HepG2 (cell line): ENCODE measurements at regions of chr1 and their contacts with region 1.

Region 1: DNA sequence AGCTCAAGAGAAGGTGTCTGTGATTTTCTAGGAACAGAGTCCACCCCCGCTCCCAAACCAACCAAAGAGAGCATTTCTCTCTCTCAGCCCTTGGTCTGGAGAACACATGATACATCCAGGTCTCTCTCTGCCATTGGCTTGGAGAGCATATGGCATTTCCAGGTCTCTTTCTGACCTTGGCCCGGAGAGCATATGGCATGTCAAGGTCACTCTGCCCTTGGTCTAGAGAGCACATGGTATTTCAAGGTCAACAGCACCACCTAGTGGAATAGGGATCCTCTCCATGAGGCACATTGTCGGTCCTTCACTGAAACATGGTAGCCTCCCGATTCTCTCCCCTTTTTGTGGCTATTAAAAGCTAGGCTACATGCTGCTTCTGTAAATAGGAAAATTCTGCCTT is 437.7 kb upstream of the OLFM3 start:
- DNase-seq: peak; percentile 52
- ATAC-seq: peak; percentile 88
- H3K4me3 ChIP-seq: no peak overlapping the region
- H3K27ac ChIP-seq: no peak overlapping the region
- H3K4me1 ChIP-seq: no peaks in the 10 kb centered on the region
- H3K27me3 ChIP-seq: no peaks in the 10 kb centered on the region
- CTCF ChIP-seq: peak; percentile 82
- EP300 ChIP-seq: no peak
- POLR2A ChIP-seq: no peak
- RAD21 ChIP-seq: 0 out of 2 replicates have a peak, but pooled peaks have one; percentile 20

Region 2: GRCh38 chr1:101506541-101507164 is 927.8 kb before region 1 on chr1:
- CTCF ChIA-PET with region 1: no interaction called
- POLR2A ChIA-PET with region 1: no interaction called
- in situ Hi-C with region 1: loop called (anchors 25 kb)
- intact Hi-C with region 1: loop called (anchors 5 kb)
- DNase-seq: peak; percentile 44
- ATAC-seq: peak; percentile 75
- H3K4me3 ChIP-seq: no peak overlapping the region
- H3K27ac ChIP-seq: no peak overlapping the region
- H3K4me1 ChIP-seq: no peaks in the 10 kb centered on the region
- H3K27me3 ChIP-seq: no peaks in the 10 kb centered on the region
- CTCF ChIP-seq: peak; percentile 59
- EP300 ChIP-seq: no peak
- POLR2A ChIP-seq: no peak
- RAD21 ChIP-seq: no peak

Region 3: DNA sequence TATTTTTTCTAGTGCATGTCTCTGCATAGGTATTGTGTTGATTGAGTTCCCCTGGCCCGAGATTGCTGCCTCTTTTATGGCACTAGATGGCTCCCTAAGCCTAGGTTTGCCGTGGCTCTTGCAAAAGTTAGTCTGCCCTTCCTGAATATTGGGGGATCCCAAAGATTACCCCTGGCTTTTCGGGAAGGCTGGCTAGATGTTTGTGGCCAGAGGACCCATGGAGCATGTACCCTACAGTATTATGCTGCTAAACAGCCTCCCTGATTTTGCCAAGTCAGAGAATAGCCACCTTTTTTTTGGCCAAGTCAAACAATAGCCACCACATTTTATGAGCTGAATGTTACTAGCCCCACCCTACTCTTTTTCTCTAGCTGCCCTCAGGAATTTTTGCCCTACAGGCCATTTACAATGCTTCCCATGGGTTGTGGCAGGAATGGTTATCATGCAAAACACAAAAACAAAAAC is 780.9 kb before region 1 on chr1:
- CTCF ChIA-PET with region 1: no interaction called
- POLR2A ChIA-PET with region 1: no interaction called
- in situ Hi-C with region 1: no loop called
- intact Hi-C with region 1: loop called (anchors 2 kb)
- DNase-seq: no peak
- ATAC-seq: no peak
- H3K4me3 ChIP-seq: no peak overlapping the region
- H3K27ac ChIP-seq: no peak overlapping the region
- H3K4me1 ChIP-seq: no peaks in the 10 kb centered on the region
- H3K27me3 ChIP-seq: no peaks in the 10 kb centered on the region
- CTCF ChIP-seq: peak; percentile 56
- EP300 ChIP-seq: no peak
- POLR2A ChIP-seq: no peak
- RAD21 ChIP-seq: no peak

Region 4: DNA sequence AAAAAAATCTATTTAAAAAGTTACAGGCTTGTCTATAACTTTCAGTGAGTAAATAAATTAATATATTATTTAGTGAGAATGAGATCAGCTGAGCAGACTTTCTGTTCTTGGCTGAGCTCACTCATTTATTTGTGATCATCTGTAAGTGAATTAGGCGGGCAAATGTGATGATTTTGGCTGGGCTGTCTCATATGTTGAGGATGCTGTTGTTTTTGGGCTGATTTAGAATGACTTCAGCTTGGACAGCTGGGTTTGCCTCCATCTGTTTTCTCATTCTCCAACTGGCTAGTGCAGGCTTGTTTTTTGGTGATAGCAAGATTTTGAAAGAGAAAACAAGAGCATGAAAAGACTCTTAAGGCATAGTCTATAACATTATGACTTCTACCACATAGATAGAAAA is 38.1 kb after region 1 on chr1:
- CTCF ChIA-PET with region 1: no interaction called
- POLR2A ChIA-PET with region 1: no interaction called
- in situ Hi-C with region 1: no loop called
- intact Hi-C with region 1: no loop called
- DNase-seq: no peak
- ATAC-seq: no peak
- H3K4me3 ChIP-seq: no peak overlapping the region
- H3K27ac ChIP-seq: no peak overlapping the region
- H3K4me1 ChIP-seq: no peaks in the 10 kb centered on the region
- H3K27me3 ChIP-seq: no peaks in the 10 kb centered on the region
- CTCF ChIP-seq: no peak
- EP300 ChIP-seq: no peak
- POLR2A ChIP-seq: no peak
- RAD21 ChIP-seq: no peak